CD4-positive, alpha-beta memory T cell (primary cell): ENCODE measurements at regions of chr11 and their contacts with region 1.

Region 1: GRCh38 chr11:67409261-67409666 is 5.4 kb downstream of the TBC1D10C start:
- DNase-seq: peak; percentile 80 to 85 (median 83)
- H3K4me3 ChIP-seq: peak overlapping the region; percentile 48 to 77
- H3K4me3 Mint-ChIP-seq: peak overlapping the region; percentile 85 to 100 (median 94)
- H3K27ac ChIP-seq: peak overlapping the region; percentile 81
- H3K27ac Mint-ChIP-seq: peak overlapping the region; percentile 37 to 98 (median 72)
- H3K4me1 ChIP-seq: peaks cover 91% of the 10 kb centered on the region
- H3K4me1 Mint-ChIP-seq: peaks cover 49 to 97% (median 67%) of the 10 kb centered on the region in 4 donors
- H3K27me3 ChIP-seq: no peaks in the 10 kb centered on the region
- H3K27me3 Mint-ChIP-seq: no peaks in the 10 kb centered on the region

Region 2: GRCh38 chr11:67045341-67045764 is 363.9 kb before region 1 on chr11:
- CTCF ChIA-PET with region 1: no interaction called
- POLR2A ChIA-PET with region 1: no interaction called
- intact Hi-C with region 1: no loop called
- DNase-seq: no peak
- H3K4me3 ChIP-seq: no peak overlapping the region
- H3K4me3 Mint-ChIP-seq: no peak overlapping the region
- H3K27ac ChIP-seq: no peak overlapping the region
- H3K27ac Mint-ChIP-seq: no peak overlapping the region
- H3K4me1 ChIP-seq: no peaks in the 10 kb centered on the region
- H3K4me1 Mint-ChIP-seq: peaks cover 0 to 2% (median 0%) of the 10 kb centered on the region in 4 donors
- H3K27me3 ChIP-seq: no peaks in the 10 kb centered on the region
- H3K27me3 Mint-ChIP-seq: peaks cover 5 to 15% of the 10 kb centered on the region in 2 donors

Region 3: GRCh38 chr11:67391304-67392132 is 17.7 kb before region 1 on chr11 and contains the start of gene RAD9A:
- CTCF ChIA-PET with region 1: interaction called, 40 read pairs
- POLR2A ChIA-PET with region 1: interaction called, 2,262 read pairs
- intact Hi-C with region 1: no loop called
- DNase-seq: peak; percentile 86 to 93 (median 89)
- H3K4me3 ChIP-seq: peak within 1 kb of the TSS; percentile 63 to 75
- H3K4me3 Mint-ChIP-seq: peak within 1 kb of the TSS; percentile 87 to 93 (median 91)
- H3K27ac ChIP-seq: peak within 1 kb of the TSS; percentile 79
- H3K27ac Mint-ChIP-seq: peak within 1 kb of the TSS; percentile 82 to 94 (median 87)
- H3K4me1 ChIP-seq: peaks cover 17% of the 10 kb centered on the region
- H3K4me1 Mint-ChIP-seq: peaks cover 23 to 46% (median 36%) of the 10 kb centered on the region in 4 donors
- H3K27me3 ChIP-seq: no peaks in the 10 kb centered on the region
- H3K27me3 Mint-ChIP-seq: no peaks in the 10 kb centered on the region
- total RNA-seq, gene RAD9A: 51.8 to 55.9 TPM

Region 4: GRCh38 chr11:67420646-67421420 is 11.6 kb after region 1 on chr11:
- CTCF ChIA-PET with region 1: interaction called, 63 read pairs
- POLR2A ChIA-PET with region 1: interaction called, 2,262 read pairs
- intact Hi-C with region 1: loop called (anchors 1 kb)
- DNase-seq: peak; percentile 96 to 99 (median 97)
- H3K4me3 ChIP-seq: peak overlapping the region in 1 of 2 donors; percentile 69
- H3K4me3 Mint-ChIP-seq: peak overlapping the region; percentile 67 to 87 (median 80)
- H3K27ac ChIP-seq: peak overlapping the region; percentile 66
- H3K27ac Mint-ChIP-seq: peak overlapping the region; percentile 64 to 94 (median 92)
- H3K4me1 ChIP-seq: peaks cover 53% of the 10 kb centered on the region
- H3K4me1 Mint-ChIP-seq: peaks cover 29 to 63% (median 46%) of the 10 kb centered on the region in 4 donors
- H3K27me3 ChIP-seq: no peaks in the 10 kb centered on the region
- H3K27me3 Mint-ChIP-seq: no peaks in the 10 kb centered on the region

Region 5: DNA sequence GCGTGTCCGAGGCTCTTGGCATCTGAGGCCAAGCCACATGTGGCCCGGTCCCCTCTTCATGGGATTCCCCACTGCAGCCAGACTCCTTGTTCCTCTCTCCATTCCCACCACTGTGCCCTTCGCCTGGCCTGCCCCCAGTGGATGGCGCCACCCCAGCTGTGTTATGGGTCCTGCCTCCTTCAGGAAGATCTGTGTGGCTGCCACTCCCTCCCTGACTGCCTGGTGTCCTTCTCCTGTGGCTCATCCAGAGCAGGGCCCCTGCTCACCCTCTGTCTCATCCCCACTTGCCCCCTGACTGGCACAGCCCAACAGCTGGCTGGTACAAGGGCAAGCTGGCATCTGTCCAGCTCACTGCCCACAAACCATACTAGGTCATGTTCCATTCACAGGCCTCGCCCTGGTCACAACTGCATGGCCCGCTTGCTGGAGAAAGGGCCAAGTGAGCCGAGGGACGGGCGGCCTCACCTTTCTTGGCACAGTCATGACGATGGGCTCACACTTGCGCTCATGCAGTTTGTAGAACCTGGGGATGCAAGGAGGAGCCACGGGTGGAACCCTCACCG is 30.1 kb after region 1 on chr11:
- CTCF ChIA-PET with region 1: interaction called, 65 read pairs
- POLR2A ChIA-PET with region 1: interaction called, 2,262 read pairs
- intact Hi-C with region 1: no loop called
- DNase-seq: peak in 1 of 5 donors; percentile 34
- H3K4me3 ChIP-seq: peak overlapping the region; percentile 29 to 81
- H3K4me3 Mint-ChIP-seq: peak overlapping the region; percentile 96 to 99 (median 97)
- H3K27ac ChIP-seq: peak overlapping the region; percentile 78
- H3K27ac Mint-ChIP-seq: peak overlapping the region; percentile 92 to 98 (median 96)
- H3K4me1 ChIP-seq: peaks cover 69% of the 10 kb centered on the region
- H3K4me1 Mint-ChIP-seq: peaks cover 35 to 81% (median 53%) of the 10 kb centered on the region in 4 donors
- H3K27me3 ChIP-seq: no peaks in the 10 kb centered on the region
- H3K27me3 Mint-ChIP-seq: no peaks in the 10 kb centered on the region